CD8-positive, alpha-beta T cell (primary cell): ENCODE measurements at regions of chr1 and their contacts with region 1.

Region 1: GRCh38 chr1:30718636-30719405 is 4.6 kb downstream of the MATN1 start:
- DNase-seq: peak; percentile 77 to 97 (median 84)
- ATAC-seq: peak; percentile 11
- H3K4me3 ChIP-seq: peak overlapping the region; percentile 84 to 98
- H3K4me3 Mint-ChIP-seq: peak overlapping the region; percentile 87
- H3K27ac ChIP-seq: peak overlapping the region; percentile 99
- H3K27ac Mint-ChIP-seq: peak overlapping the region; percentile 94
- H3K4me1 ChIP-seq: peaks cover 34% of the 10 kb centered on the region
- H3K4me1 Mint-ChIP-seq: peaks cover 42% of the 10 kb centered on the region
- H3K27me3 ChIP-seq: no peaks in the 10 kb centered on the region
- H3K27me3 Mint-ChIP-seq: no peaks in the 10 kb centered on the region
- CTCF ChIP-seq: no peak

Region 2: GRCh38 chr1:30732277-30732996 is 13.6 kb after region 1 on chr1:
- CTCF ChIA-PET with region 1: interaction called, 40 read pairs
- POLR2A ChIA-PET with region 1: interaction called, 19 read pairs
- intact Hi-C with region 1: no loop called
- DNase-seq: peak in 2 of 9 experiments; percentile 53 to 68
- ATAC-seq: peak; percentile 69
- H3K4me3 ChIP-seq: no peak overlapping the region
- H3K4me3 Mint-ChIP-seq: no peak overlapping the region
- H3K27ac ChIP-seq: peak overlapping the region; percentile 10 to 56
- H3K27ac Mint-ChIP-seq: peak overlapping the region; percentile 76
- H3K4me1 ChIP-seq: peaks cover 13% of the 10 kb centered on the region
- H3K4me1 Mint-ChIP-seq: peaks cover 32% of the 10 kb centered on the region
- H3K27me3 ChIP-seq: no peaks in the 10 kb centered on the region
- H3K27me3 Mint-ChIP-seq: no peaks in the 10 kb centered on the region
- CTCF ChIP-seq: no peak

Region 3: GRCh38 chr1:30749691-30750583 is 31.1 kb after region 1 on chr1:
- CTCF ChIA-PET with region 1: interaction called, 86 read pairs
- POLR2A ChIA-PET with region 1: interaction called, 101 read pairs
- intact Hi-C with region 1: no loop called
- DNase-seq: peak; percentile 54 to 94 (median 81)
- ATAC-seq: peak; percentile 78
- H3K4me3 ChIP-seq: peak overlapping the region; percentile 19 to 40
- H3K4me3 Mint-ChIP-seq: peak overlapping the region; percentile 82
- H3K27ac ChIP-seq: peak overlapping the region; percentile 72 to 92
- H3K27ac Mint-ChIP-seq: peak overlapping the region; percentile 99
- H3K4me1 ChIP-seq: peaks cover 93% of the 10 kb centered on the region
- H3K4me1 Mint-ChIP-seq: peaks cover 96% of the 10 kb centered on the region
- H3K27me3 ChIP-seq: no peaks in the 10 kb centered on the region
- H3K27me3 Mint-ChIP-seq: no peaks in the 10 kb centered on the region
- CTCF ChIP-seq: no peak

Region 4: GRCh38 chr1:30773722-30774358 is 55.0 kb after region 1 on chr1:
- CTCF ChIA-PET with region 1: interaction called, 485 read pairs
- POLR2A ChIA-PET with region 1: interaction called, 50 read pairs
- intact Hi-C with region 1: loop called in 1 of 2 experiments (anchors 1 kb)
- DNase-seq: no peak
- ATAC-seq: no peak
- H3K4me3 ChIP-seq: no peak overlapping the region
- H3K4me3 Mint-ChIP-seq: no peak overlapping the region
- H3K27ac ChIP-seq: no peak overlapping the region
- H3K27ac Mint-ChIP-seq: no peak overlapping the region
- H3K4me1 ChIP-seq: peaks cover under 1% of the 10 kb centered on the region
- H3K4me1 Mint-ChIP-seq: peaks cover 7% of the 10 kb centered on the region
- H3K27me3 ChIP-seq: no peaks in the 10 kb centered on the region
- H3K27me3 Mint-ChIP-seq: no peaks in the 10 kb centered on the region
- CTCF ChIP-seq: no peak

Region 5: GRCh38 chr1:30911046-30911954 is 192.5 kb after region 1 on chr1:
- CTCF ChIA-PET with region 1: interaction called, 11 read pairs
- POLR2A ChIA-PET with region 1: interaction called, 4 read pairs
- intact Hi-C with region 1: loop called (anchors 1 to 5 kb)
- DNase-seq: peak in 7 of 9 experiments; percentile 29 to 67 (median 47)
- ATAC-seq: no peak
- H3K4me3 ChIP-seq: no peak overlapping the region
- H3K4me3 Mint-ChIP-seq: no peak overlapping the region
- H3K27ac ChIP-seq: no peak overlapping the region
- H3K27ac Mint-ChIP-seq: no peak overlapping the region
- H3K4me1 ChIP-seq: peaks cover 16% of the 10 kb centered on the region
- H3K4me1 Mint-ChIP-seq: peaks cover 17% of the 10 kb centered on the region
- H3K27me3 ChIP-seq: peaks cover 14 to 20% of the 10 kb centered on the region in 2 experiments
- H3K27me3 Mint-ChIP-seq: peaks cover 23% of the 10 kb centered on the region
- CTCF ChIP-seq: no peak

Region 6: GRCh38 chr1:31296486-31297276 is 577.9 kb after region 1 on chr1 and contains the starts of genes SNRNP40 and ZCCHC17:
- CTCF ChIA-PET with region 1: no interaction called
- POLR2A ChIA-PET with region 1: interaction called, 3 read pairs
- intact Hi-C with region 1: loop called (anchors 1 to 2 kb)
- DNase-seq: peak; percentile 85 to 99 (median 91)
- ATAC-seq: peak; percentile 90
- H3K4me3 ChIP-seq: peak within 1 kb of the TSS; percentile 67 to 83
- H3K4me3 Mint-ChIP-seq: no peak within 1 kb of the TSS
- H3K27ac ChIP-seq: peak within 1 kb of the TSS; percentile 90 to 92
- H3K27ac Mint-ChIP-seq: no peak within 1 kb of the TSS
- H3K4me1 ChIP-seq: peaks cover 31% of the 10 kb centered on the region
- H3K4me1 Mint-ChIP-seq: peaks cover 35% of the 10 kb centered on the region
- H3K27me3 ChIP-seq: no peaks in the 10 kb centered on the region
- H3K27me3 Mint-ChIP-seq: no peaks in the 10 kb centered on the region
- CTCF ChIP-seq: no peak
- total RNA-seq, gene SNRNP40: 78.3 to 81.9 TPM
- total RNA-seq, gene ZCCHC17: 7.2 to 8.0 TPM